Posterior vena cava (tissue), 2 donors: ENCODE measurements at regions of chr4 and their contacts with region 1.

Region 1: DNA sequence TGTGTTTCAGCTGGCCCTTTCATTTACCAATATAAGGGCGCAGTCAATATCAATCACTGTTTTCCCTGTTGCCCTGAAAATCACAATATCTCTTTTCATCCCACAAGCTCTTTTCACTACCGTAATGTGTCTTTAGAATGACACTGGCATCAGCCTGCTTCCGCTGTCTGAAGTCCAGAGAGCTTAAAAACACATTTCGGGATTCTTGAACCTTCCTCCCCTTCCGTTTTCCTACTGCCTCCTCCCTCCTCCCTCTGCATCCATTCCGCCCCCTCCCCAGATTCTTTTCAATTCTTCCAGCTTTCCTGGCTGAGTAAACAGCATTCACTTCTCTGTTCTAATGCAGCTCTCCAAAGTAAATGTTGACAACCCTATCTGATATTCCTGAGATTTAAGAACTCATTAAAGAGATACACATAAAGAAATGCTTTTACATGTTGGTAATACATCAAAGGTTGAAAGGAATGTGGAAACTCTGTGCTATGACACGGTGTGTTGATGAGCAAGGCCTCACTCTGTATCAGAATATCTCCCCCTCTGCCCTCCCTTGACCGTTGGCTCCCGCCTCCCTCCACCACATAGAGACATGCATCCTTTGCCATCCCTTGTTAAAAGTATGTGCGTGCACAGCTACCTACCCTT is 83.5 kb upstream of the SPRY1 start:
- DNase-seq: no peak

Region 2: DNA sequence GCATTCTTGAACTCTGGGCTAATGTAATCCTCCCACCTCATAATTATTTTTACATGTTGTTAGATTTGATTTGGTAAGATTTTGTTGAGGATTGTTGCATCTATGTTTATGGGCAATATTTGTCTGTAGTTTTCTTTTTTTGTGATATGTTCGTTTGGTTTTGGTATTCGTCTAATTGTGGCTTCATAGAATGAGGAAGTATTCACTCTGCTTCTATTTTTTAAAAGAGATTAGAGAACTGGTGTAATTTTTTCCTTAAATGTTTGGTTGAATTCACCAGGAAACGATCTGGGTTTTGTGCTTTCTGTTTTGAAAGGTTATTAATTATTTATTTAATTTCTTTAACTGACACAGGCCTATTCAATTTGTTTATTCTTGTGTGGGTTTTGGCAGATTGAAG is 229.4 kb before region 1 on chr4:
- intact Hi-C with region 1: no loop called
- DNase-seq: no peak

Region 3: DNA sequence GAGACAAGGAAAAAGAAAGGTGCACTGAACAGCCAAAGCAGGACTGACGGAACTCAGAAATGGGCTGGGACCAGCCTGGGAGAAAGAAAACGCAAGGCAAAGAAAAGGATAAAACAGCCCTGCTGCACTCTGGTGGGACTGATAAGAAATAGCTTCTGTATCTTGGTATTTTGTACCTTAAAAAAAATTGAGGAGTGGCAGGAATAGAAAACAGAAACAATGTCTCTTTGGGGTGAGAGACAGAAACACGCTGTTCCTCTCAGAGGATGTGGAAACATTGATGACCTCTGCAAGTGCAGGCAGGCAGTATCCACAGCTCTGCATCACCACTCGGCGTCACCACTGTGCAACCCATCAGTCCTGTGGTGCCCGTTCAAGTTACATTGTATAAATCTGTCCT is 68.9 kb before region 1 on chr4:
- intact Hi-C with region 1: no loop called
- DNase-seq: peak; percentile 84

Region 4: DNA sequence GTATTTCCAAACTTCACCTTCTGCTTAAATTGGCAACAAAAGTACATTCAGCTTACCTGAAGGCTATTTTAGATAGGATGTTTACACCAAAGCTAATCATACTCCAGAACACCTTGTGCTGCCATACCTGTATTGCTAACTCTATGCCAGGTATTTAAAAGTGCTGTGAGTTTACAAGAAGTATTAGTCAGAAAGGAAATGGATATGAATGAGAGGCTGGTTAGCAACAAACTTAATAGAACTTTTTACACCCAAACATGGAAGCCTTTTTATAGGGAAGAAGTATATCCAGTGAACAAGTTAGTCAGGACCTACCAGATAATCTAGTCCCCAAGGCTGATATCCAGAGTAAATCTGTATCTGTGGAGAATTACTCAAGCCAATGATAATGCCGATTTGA is 47.6 kb before region 1 on chr4:
- intact Hi-C with region 1: no loop called
- DNase-seq: no peak

Region 5: DNA sequence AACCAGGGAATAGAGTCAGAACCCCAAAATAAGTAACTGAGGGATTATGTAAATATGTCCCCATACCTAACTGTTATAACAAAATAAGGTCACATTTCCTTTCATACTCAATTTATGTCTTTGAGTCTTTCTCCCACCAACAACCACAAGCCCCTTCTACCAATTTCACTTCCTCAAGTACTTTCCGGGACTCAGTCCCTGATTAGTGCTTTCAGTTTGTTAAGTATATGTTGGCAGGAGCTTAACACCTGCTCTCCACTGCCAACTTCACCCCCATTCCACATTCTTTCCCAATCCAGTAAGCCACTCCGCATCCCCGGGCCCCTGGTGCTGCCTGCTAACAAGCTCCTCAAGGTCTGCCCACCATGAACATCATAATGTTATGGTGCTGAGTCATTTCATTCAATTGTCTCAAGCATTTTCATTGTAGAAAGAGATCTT is 12.2 kb after region 1 on chr4:
- intact Hi-C with region 1: loop called in 1 of 2 experiments (anchors 1 kb)
- DNase-seq: no peak